ENCODE measurements at regions of chr16 and their contacts with region 1.

Region 1: GRCh38 chr16:67862623-67863583 is 9.9 kb upstream of the EDC4 start:
- DNase-seq: no peak
- ATAC-seq: no peak
- H3K4me3 Mint-ChIP-seq: no peak overlapping the region
- H3K27ac Mint-ChIP-seq: peak overlapping the region in 3 of 10 donors; percentile 17 to 56 (median 29)
- H3K4me1 Mint-ChIP-seq: peaks cover 10 to 25% (median 14%) of the 10 kb centered on the region in 4 donors
- H3K27me3 Mint-ChIP-seq: no peaks in the 10 kb centered on the region

Region 2: GRCh38 chr16:67816240-67817031 is 46.5 kb before region 1 on chr16:
- POLR2A ChIA-PET with region 1: interaction called, 10 read pairs
- DNase-seq: peak; percentile 74 to 97 (median 89)
- ATAC-seq: peak; percentile 98 to 99
- H3K4me3 Mint-ChIP-seq: peak overlapping the region in 7 of 10 donors; percentile 30 to 80 (median 48)
- H3K27ac Mint-ChIP-seq: peak overlapping the region in 5 of 10 donors; percentile 11 to 82 (median 69)
- H3K4me1 Mint-ChIP-seq: peaks cover 3 to 7% (median 6%) of the 10 kb centered on the region in 4 donors
- H3K27me3 Mint-ChIP-seq: no peaks in the 10 kb centered on the region

Region 3: GRCh38 chr16:67847064-67847861 is 15.6 kb before region 1 on chr16 and contains the start of gene CENPT:
- POLR2A ChIA-PET with region 1: no interaction called
- DNase-seq: peak in 1 of 10 donors; percentile 55
- ATAC-seq: peak; percentile 49 to 52
- H3K4me3 Mint-ChIP-seq: peak within 1 kb of the TSS; percentile 80 to 96 (median 89)
- H3K27ac Mint-ChIP-seq: peak within 1 kb of the TSS; percentile 53 to 96 (median 90)
- H3K4me1 Mint-ChIP-seq: peaks cover 16 to 68% (median 46%) of the 10 kb centered on the region in 4 donors
- H3K27me3 Mint-ChIP-seq: no peaks in the 10 kb centered on the region
- polyA plus RNA-seq, gene CENPT: 11.8 to 17.8 (median 13.1) TPM

Region 4: DNA sequence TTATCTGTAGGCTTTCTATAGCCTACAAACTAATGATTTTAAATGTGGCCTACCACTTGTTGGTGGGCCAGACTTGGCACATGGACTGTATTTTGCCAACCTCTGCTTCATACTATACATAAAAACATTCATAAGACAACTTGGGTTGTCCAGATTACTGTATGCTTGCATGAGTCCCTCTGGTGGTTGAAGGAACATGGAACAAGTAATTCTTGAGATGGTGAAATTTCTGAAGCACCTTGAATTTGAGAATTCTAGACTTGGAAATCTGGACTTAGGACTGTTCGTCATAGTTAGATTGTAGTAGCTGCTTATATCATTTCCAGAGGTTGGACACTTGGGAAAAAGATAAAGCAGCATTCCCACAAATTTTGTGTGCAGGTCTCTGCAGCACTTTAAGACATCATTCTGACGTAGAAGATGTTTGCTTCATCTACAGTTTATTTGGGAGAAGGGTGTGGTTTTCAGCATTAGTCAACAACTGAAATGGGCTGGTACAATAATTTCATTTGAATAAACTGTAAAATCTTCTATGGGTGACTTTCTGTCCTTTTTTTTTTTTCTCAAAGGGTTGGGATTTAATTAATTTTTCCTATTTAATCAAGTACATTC is 253.5 kb after region 1 on chr16:
- POLR2A ChIA-PET with region 1: no interaction called
- DNase-seq: peak in 3 of 10 donors; percentile 5 to 39 (median 31)
- ATAC-seq: peak; percentile 62 to 72
- H3K4me3 Mint-ChIP-seq: peak overlapping the region in 9 of 10 donors; percentile 12 to 57 (median 41)
- H3K27ac Mint-ChIP-seq: peak overlapping the region; percentile 16 to 88 (median 64)
- H3K4me1 Mint-ChIP-seq: peaks cover 40 to 96% (median 83%) of the 10 kb centered on the region in 4 donors
- H3K27me3 Mint-ChIP-seq: no peaks in the 10 kb centered on the region

Measured in naive thymus-derived CD8-positive, alpha-beta T cell (primary cell).